Activated CD4-positive, alpha-beta T cell treated with anti-CD3 and anti-CD28 coated beads, Interleukin-2, amount 10 ng/mL, durations not matched to agents 24 days and 14 days (primary cell): ENCODE measurements at regions of chr17 and their contacts with region 1.

Region 1: GRCh38 chr17:57833179-57833939 is 16.5 kb downstream of the MRPS23 start:
- DNase-seq: peak; percentile 89
- H3K4me3 Mint-ChIP-seq: no peak overlapping the region
- H3K27ac Mint-ChIP-seq: no peak overlapping the region
- H3K4me1 Mint-ChIP-seq: peaks cover 5% of the 10 kb centered on the region
- H3K27me3 Mint-ChIP-seq: no peaks in the 10 kb centered on the region

Region 2: GRCh38 chr17:57783106-57783742 is 50.1 kb before region 1 on chr17:
- intact Hi-C with region 1: loop called (anchors 1 kb)
- DNase-seq: peak; percentile 95
- H3K4me3 Mint-ChIP-seq: no peak overlapping the region
- H3K27ac Mint-ChIP-seq: no peak overlapping the region
- H3K4me1 Mint-ChIP-seq: no peaks in the 10 kb centered on the region
- H3K27me3 Mint-ChIP-seq: peaks cover 23% of the 10 kb centered on the region

Region 3: DNA sequence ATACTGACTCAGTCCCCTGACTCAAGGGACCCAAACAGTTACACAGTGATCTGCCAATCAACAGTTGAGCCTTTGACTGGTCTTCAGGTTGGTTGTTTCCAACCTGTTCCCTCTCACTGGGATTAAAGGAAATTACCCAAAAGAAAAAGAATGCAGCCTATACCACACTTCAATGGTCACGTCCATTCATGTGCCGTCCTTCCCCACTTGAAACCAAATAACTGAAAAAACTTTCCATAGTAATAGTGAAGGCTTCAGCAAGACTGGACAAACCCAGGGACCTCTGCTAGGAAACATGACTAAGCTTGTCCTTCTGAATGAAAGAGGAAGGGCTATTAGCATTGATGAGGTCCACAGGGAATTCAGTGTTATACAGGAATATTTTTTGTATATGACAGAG is 14.1 kb before region 1 on chr17:
- intact Hi-C with region 1: no loop called
- DNase-seq: no peak
- H3K4me3 Mint-ChIP-seq: no peak overlapping the region
- H3K27ac Mint-ChIP-seq: no peak overlapping the region
- H3K4me1 Mint-ChIP-seq: no peaks in the 10 kb centered on the region
- H3K27me3 Mint-ChIP-seq: peaks cover 11% of the 10 kb centered on the region